SK-N-SH (cell line): ENCODE measurements at regions of chr18 and their contacts with region 1.

Region 1: GRCh38 chr18:35756506-35757117 is 175.1 kb downstream of the GALNT1 start:
- DNase-seq: peak; percentile 67
- H3K4me3 ChIP-seq: no peak overlapping the region
- H3K27ac ChIP-seq: no peak overlapping the region
- H3K4me1 ChIP-seq: no peaks in the 10 kb centered on the region; a peak in 1 of 4 replicates
- H3K27me3 ChIP-seq: no peaks in the 10 kb centered on the region; the same call in 1 of the 2 replicates
- CTCF ChIP-seq: peak; percentile 84
- EP300 ChIP-seq: no peak
- RAD21 ChIP-seq: peak; percentile 94

Region 2: DNA sequence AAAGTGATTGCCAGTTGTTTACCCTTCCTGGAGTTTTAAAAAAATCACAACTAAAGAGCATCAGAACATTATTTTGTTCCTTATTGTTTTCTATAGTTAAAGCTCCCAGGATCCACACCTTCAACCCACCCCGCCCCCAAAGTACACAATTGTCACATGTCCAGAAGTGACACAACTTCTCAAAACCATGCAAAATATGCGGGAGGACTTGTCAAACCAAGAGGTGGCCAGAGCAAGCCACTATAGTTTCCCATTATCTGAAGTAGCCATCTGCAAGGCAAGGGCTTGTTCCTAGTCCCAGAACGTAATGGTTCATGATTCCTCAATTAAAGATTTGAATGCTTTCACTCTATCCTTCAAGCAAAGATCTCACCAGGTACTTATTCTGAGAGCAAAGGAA is 249.0 kb before region 1 on chr18:
- CTCF ChIA-PET with region 1: no interaction called
- POLR2A ChIA-PET with region 1: no interaction called
- DNase-seq: no peak
- H3K4me3 ChIP-seq: no peak overlapping the region
- H3K27ac ChIP-seq: no peak overlapping the region
- H3K4me1 ChIP-seq: no peaks in the 10 kb centered on the region; a peak in 1 of 4 replicates
- H3K27me3 ChIP-seq: no peaks in the 10 kb centered on the region
- CTCF ChIP-seq: no peak
- EP300 ChIP-seq: no peak
- RAD21 ChIP-seq: no peak

Region 3: GRCh38 chr18:35730691-35731370 is 25.8 kb before region 1 on chr18:
- CTCF ChIA-PET with region 1: interaction called, 13 read pairs
- POLR2A ChIA-PET with region 1: no interaction called
- DNase-seq: no peak
- H3K4me3 ChIP-seq: peak overlapping the region in 1 of 2 experiments; percentile 7; a peak in 1 of 4 replicates
- H3K27ac ChIP-seq: no peak overlapping the region
- H3K4me1 ChIP-seq: peaks cover 0 to 2% of the 10 kb centered on the region in 2 experiments; a peak in 1 of 4 replicates
- H3K27me3 ChIP-seq: no peaks in the 10 kb centered on the region
- CTCF ChIP-seq: no peak
- EP300 ChIP-seq: no peak
- RAD21 ChIP-seq: no peak

Region 4: DNA sequence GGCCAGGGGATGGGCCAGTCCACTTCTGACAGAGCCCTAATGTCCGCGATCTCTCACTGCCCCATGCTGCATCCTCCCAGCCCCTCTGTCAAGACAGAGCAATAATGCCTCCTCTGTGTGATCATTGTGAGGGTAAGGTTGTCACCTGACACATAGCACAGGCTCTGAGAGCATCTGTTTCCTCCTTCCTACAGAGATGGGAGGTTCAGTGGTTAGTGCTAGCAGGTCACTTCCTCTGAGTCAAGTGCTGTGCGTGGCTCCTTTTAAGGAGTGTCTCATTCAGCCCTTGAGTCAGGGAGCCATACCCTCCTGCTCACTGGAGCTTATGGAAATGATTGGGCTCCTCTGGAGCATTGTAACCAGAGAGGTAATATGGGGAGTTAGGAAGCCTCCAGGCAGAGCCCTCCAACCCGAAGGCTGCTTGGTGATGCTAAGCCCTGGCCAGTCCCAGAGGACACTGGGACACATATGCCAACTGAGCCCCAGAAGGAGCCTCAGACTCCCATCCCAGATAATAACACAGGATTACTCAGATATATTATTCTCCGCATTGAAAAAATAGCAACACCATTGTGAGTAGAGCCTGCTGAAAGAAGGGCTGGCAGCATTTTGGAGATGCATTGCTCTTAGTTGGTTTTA is 13.9 kb after region 1 on chr18:
- CTCF ChIA-PET with region 1: interaction called, 16 read pairs
- POLR2A ChIA-PET with region 1: no interaction called
- DNase-seq: no peak
- H3K4me3 ChIP-seq: no peak overlapping the region
- H3K27ac ChIP-seq: no peak overlapping the region
- H3K4me1 ChIP-seq: no peaks in the 10 kb centered on the region; a peak in 1 of 4 replicates
- H3K27me3 ChIP-seq: no peaks in the 10 kb centered on the region
- CTCF ChIP-seq: no peak
- EP300 ChIP-seq: no peak
- RAD21 ChIP-seq: no peak

Region 5: GRCh38 chr18:35817604-35818352 is 61.2 kb after region 1 on chr18:
- CTCF ChIA-PET with region 1: interaction called, 12 read pairs
- POLR2A ChIA-PET with region 1: no interaction called
- DNase-seq: peak; percentile 8
- H3K4me3 ChIP-seq: no peak overlapping the region
- H3K27ac ChIP-seq: no peak overlapping the region
- H3K4me1 ChIP-seq: no peaks in the 10 kb centered on the region
- H3K27me3 ChIP-seq: no peaks in the 10 kb centered on the region
- CTCF ChIP-seq: no peak
- EP300 ChIP-seq: no peak
- RAD21 ChIP-seq: no peak

Region 6: DNA sequence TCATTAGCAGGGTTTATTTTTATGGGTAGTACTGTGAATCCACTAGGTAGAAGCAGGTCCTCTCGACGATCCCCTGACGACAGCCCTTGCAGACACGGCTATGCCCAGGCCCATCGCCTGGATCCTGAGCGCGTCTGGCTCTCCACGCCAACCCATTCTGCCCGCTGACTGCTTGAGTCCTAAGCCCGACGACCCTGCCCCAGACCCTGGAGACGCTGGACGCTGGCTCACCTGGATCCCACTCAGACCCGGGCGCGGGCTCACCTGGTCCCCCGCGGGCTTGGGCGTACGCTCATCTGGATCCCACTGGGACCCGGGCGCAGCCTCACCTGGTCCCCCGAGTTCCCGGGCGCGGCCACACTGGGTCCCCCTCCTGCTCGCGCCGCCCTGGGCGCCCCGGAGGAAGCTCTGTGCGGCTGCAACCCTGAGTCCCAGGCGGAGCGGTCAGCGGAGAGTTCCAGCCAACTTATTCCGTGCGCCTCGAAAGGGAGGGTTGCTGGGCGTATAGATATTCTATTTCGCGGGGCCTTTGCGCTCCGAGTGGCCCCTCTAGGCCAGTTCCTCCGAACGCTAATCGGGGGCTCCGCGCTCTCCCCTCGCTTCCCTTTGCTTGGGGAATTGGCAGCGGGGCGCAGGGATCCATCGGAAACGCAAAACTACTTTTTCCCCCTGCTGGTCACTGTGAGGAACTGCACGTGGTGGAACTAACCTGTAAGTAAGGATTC is 193.5 kb after region 1 on chr18:
- CTCF ChIA-PET with region 1: interaction called, 74 read pairs
- POLR2A ChIA-PET with region 1: no interaction called
- DNase-seq: peak; percentile 79
- H3K4me3 ChIP-seq: peak overlapping the region; percentile 56 to 80
- H3K27ac ChIP-seq: no peak overlapping the region
- H3K4me1 ChIP-seq: peaks cover 0 to 7% of the 10 kb centered on the region in 2 experiments; a peak in 1 of 4 replicates
- H3K27me3 ChIP-seq: no peaks in the 10 kb centered on the region
- CTCF ChIP-seq: peak; percentile 93
- EP300 ChIP-seq: no peak
- RAD21 ChIP-seq: peak; percentile 71

Region 7: GRCh38 chr18:35999925-36000324 is 243.3 kb after region 1 on chr18:
- CTCF ChIA-PET with region 1: no interaction called
- POLR2A ChIA-PET with region 1: no interaction called
- DNase-seq: no peak
- H3K4me3 ChIP-seq: no peak overlapping the region
- H3K27ac ChIP-seq: no peak overlapping the region
- H3K4me1 ChIP-seq: no peaks in the 10 kb centered on the region
- H3K27me3 ChIP-seq: no peaks in the 10 kb centered on the region
- CTCF ChIP-seq: no peak
- EP300 ChIP-seq: no peak
- RAD21 ChIP-seq: no peak

Region 8: DNA sequence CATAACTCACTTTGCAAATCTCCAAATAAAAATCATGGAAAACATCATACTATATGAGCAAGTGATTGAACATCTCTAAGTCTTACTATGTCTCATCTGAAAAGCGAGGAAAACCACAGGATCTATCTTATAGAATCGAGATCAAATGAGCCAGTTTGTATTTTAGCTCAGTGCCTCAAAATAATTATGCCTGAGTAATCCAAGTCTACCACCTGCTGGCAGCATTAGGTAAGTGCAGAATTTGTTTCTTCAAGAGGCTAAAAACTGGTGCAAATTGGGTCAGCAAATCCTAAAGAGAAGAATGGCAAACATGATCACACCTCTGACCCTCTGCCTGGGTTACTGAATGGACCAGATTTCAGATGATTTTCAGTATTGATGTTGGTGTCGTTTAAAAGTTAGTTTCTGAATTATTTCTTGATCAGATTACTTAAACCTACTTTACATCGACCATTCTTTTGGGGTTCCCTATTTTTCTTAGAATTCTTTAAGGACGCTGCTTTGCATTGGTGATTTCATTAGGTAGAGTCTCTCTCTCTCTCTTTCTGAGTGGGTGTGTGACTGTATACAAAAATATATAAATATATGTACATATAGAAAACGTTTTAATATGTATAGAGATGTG is 528.2 kb after region 1 on chr18:
- CTCF ChIA-PET with region 1: interaction called, 43 read pairs
- POLR2A ChIA-PET with region 1: no interaction called
- DNase-seq: peak; percentile 55
- H3K4me3 ChIP-seq: no peak overlapping the region; a peak in 1 of 4 replicates
- H3K27ac ChIP-seq: no peak overlapping the region
- H3K4me1 ChIP-seq: peaks cover 0 to 6% of the 10 kb centered on the region in 2 experiments; a peak in 1 of 4 replicates
- H3K27me3 ChIP-seq: no peaks in the 10 kb centered on the region
- CTCF ChIP-seq: peak; percentile 92
- EP300 ChIP-seq: no peak
- RAD21 ChIP-seq: peak; percentile 99